H1 (cell line): ENCODE measurements at regions of chr14 and their contacts with region 1.

Region 1: DNA sequence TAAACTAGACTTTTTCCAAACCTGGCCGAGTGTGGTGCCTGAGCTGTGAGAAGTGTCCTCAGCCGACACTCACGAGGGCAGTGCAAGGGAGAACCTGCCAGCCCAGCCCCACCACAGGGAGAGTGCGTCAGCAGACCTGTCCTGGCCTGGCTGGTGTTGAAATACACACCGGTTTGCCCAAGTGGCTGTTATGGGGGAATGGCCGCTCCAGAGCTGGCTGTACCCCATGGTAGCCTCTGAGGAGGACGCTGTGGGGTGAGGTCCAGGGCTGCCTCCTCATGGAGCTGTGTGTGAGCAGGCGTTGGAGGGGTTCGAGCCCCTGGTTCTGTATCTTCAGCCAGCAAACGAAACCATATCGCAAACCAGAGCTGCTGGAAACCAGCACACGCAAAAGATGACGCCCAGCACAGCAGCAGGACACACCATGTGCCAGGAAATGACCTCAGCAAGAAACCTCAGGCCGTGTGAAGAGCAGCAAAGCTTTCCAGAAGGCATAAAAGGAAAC is 9.4 kb downstream of the ANKRD9 start:
- DNase-seq: no peak
- H3K4me3 ChIP-seq: no peak overlapping the region
- H3K27ac ChIP-seq: no peak overlapping the region
- H3K4me1 ChIP-seq: no peaks in the 10 kb centered on the region; a peak in 1 of 7 replicates
- H3K27me3 ChIP-seq: no peaks in the 10 kb centered on the region; a peak in 1 of 7 replicates
- CTCF ChIP-seq: no peak
- EP300 ChIP-seq: no peak
- POLR2A ChIP-seq: no peak
- RAD21 ChIP-seq: no peak

Region 2: DNA sequence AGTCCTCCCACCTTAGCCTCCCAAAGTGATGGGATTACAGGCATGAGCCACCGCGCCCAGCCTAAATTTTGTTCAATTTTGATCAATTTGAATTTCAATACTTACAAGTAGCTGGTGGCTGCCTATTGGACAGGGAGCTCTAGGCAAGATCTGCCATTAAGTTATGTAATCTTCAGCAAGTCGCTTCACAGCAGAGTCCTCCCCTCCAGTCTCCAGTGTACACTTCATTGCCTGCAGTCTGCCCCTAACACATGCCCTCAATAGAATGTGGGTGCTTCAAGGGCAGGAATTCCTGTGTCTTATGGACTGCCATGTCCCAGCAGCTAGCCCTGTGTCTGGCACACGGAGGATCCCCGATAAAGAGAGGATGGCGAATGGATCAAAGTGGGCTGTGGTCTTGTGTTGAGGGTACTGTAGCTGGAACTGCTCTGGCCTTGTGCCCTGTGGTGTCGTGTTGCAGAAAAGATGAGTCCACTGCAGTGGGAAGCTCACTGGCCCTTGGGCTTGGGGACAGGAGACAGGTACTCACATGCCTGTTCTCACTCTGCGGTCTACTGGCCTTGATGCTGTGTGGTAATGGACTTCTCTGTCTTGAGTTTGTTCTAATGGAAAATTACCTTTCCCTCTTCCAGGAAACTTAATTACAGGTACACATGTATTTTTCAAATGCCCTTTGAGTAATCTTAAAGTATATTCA is 69.8 kb before region 1 on chr14:
- CTCF ChIA-PET with region 1: interaction called, 15 read pairs
- POLR2A ChIA-PET with region 1: no interaction called
- DNase-seq: no peak
- H3K4me3 ChIP-seq: no peak overlapping the region
- H3K27ac ChIP-seq: no peak overlapping the region
- H3K4me1 ChIP-seq: no peaks in the 10 kb centered on the region
- H3K27me3 ChIP-seq: no peaks in the 10 kb centered on the region
- CTCF ChIP-seq: no peak
- EP300 ChIP-seq: no peak
- POLR2A ChIP-seq: no peak
- RAD21 ChIP-seq: no peak

Region 3: DNA sequence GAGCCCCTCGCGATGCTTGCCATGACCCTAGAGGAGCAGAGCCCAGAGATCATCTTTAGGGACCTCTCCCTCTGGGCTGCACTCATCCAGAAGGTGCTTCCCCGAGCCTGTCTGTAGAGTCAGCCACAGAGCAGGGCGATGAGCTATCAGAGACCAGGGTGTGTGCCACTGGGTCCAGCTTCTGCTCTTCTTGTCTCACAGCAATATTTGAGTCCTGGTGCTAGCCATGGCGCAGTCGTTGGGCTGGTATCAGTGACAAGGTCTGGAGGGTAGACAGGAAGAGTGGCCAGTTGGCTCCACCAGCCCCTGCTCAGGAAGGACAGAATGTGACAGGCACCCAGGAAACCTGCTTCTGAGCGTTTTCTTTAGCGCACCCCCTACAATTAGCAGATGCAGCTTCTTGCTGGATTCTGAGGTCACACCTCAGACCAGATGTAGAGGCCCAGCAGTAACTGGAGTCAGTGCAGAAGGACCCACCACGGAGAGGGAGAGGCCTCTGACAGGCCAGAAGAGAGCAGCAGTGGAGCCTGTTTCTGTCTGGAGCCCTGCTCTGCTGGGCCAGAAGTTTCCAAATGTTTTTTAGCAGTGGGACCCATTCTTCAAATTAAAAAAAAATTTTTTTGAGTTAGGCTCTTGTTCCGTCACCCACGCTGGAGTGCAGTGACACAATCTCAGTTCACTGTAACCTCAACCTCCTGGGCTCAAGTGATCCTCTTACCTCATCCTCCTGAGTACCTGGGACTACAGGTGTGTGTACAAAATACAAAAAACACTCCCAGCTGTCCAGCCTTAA is 14.3 kb before region 1 on chr14:
- CTCF ChIA-PET with region 1: interaction called, 16 read pairs
- POLR2A ChIA-PET with region 1: interaction called, 3 read pairs
- DNase-seq: no peak
- H3K4me3 ChIP-seq: no peak overlapping the region
- H3K27ac ChIP-seq: no peak overlapping the region
- H3K4me1 ChIP-seq: no peaks in the 10 kb centered on the region
- H3K27me3 ChIP-seq: no peaks in the 10 kb centered on the region
- CTCF ChIP-seq: no peak
- EP300 ChIP-seq: no peak
- POLR2A ChIP-seq: no peak
- RAD21 ChIP-seq: no peak

Region 4: DNA sequence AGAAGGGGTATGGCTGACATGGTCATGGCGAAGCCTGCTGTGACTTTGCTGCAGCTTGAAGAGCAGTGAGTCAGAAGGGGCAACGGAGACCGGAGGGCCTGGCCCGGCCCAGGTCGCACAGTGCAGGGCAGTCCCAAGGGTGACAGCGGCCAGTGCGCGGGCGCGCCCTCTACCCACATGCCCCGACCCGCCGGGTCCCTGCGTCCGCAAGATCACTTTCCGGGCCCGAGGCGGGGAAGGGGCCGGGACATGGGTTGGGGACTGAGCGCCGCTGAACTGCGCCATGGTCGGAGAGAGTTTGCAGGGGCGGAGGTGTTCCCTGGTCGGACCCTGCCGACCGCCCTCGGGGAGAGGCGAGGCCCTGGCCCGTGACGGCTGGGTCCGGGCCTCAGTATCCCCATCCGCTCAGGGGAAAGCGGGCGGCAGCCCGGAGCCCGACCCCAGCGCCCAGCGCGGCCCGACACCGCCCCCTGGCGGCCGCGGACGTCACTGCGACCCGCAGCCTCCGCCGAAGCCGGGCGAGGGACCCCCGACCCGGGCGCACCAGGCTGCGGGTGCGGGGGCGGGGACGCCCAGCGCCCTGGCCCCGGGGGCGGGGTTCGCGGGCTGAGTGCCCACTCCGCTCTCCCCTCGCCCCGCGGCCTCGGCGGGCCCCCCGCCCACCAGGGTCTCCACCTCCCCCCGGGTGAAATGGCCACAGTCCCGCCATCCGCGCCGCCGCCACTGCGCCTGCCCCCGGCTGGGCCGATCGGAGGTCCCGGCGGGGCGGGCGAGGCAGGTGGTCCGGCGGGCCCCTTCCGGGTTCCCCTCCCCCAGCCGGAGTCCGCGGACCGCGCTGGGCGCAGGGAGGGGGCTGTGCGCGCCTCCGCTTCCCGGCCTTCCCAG is 16.6 kb after region 1 on chr14:
- CTCF ChIA-PET with region 1: interaction called, 10 read pairs
- POLR2A ChIA-PET with region 1: interaction called, 3 read pairs
- DNase-seq: peak in 1 of 2 experiments; percentile 95
- H3K4me3 ChIP-seq: peak overlapping the region; percentile 48 to 81 (median 62)
- H3K27ac ChIP-seq: no peak overlapping the region
- H3K4me1 ChIP-seq: peaks cover 0 to 5% (median under 1%) of the 10 kb centered on the region in 4 experiments; a peak in 2 of 7 replicates
- H3K27me3 ChIP-seq: peaks cover 0 to 4% (median 1%) of the 10 kb centered on the region in 4 experiments; a peak in 2 of 7 replicates
- CTCF ChIP-seq: peak in 2 of 3 experiments; percentile 81 to 90; a peak in 3 of 4 replicates
- EP300 ChIP-seq: no peak
- POLR2A ChIP-seq: no peak
- RAD21 ChIP-seq: peak; percentile 68 to 84